CD4-positive, alpha-beta T cell (primary cell): ENCODE measurements at regions of chr1 and their contacts with region 1.

Region 1: DNA sequence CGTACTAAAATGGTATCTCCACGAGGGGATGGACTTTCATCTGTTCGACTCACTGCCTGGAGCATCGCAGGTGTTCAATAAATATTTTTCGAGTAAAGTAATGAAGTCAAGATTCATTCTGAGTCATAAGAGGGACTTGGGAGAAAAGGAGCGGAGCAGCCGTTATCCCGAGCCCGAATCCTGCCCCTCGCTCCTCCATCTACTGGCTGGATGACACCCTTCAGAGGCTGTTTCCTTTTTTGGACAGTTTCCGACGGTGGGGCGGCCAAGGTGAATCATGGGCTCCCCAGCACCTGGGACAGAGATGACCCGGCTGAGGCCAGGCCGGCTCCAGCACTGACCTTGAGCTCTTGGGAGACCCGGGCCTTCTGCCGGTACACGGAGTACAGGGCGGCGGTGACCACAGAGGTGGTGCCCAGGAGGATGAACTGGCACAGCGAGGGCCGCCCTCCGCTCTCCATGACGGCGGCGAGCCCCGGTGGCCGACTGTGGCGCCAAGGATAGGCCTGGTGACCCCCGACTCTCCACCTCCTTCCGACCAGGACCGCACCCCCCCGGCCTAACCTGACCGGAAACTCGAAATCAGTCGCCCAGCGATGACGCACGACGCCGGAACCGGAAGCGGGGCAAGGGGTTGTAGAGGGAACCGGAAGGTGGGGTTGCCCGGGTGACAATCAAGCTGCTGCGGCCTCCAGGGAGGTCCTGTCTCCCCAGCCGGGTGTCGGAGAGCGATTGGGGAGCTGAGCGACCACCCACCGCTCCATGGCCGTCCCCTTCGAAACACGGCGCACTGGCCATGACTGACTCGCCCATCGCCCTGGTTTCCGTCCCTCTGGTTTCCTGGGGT is at the start of gene MUL1:
- DNase-seq: peak; percentile 85 to 95 (median 91)
- ATAC-seq: peak; percentile 85
- H3K4me3 ChIP-seq: peak within 1 kb of the TSS; percentile 100
- H3K4me3 Mint-ChIP-seq: peak within 1 kb of the TSS; percentile 86
- H3K27ac ChIP-seq: peak within 1 kb of the TSS; percentile 93 to 98
- H3K27ac Mint-ChIP-seq: peak within 1 kb of the TSS; percentile 83
- H3K4me1 ChIP-seq: peaks cover 25% of the 10 kb centered on the region
- H3K4me1 Mint-ChIP-seq: peaks cover 30% of the 10 kb centered on the region
- H3K27me3 ChIP-seq: no peaks in the 10 kb centered on the region
- H3K27me3 Mint-ChIP-seq: peaks cover 11% of the 10 kb centered on the region
- CTCF ChIP-seq: no peak
- total RNA-seq, gene MUL1: 17.2 to 17.6 TPM

Region 2: DNA sequence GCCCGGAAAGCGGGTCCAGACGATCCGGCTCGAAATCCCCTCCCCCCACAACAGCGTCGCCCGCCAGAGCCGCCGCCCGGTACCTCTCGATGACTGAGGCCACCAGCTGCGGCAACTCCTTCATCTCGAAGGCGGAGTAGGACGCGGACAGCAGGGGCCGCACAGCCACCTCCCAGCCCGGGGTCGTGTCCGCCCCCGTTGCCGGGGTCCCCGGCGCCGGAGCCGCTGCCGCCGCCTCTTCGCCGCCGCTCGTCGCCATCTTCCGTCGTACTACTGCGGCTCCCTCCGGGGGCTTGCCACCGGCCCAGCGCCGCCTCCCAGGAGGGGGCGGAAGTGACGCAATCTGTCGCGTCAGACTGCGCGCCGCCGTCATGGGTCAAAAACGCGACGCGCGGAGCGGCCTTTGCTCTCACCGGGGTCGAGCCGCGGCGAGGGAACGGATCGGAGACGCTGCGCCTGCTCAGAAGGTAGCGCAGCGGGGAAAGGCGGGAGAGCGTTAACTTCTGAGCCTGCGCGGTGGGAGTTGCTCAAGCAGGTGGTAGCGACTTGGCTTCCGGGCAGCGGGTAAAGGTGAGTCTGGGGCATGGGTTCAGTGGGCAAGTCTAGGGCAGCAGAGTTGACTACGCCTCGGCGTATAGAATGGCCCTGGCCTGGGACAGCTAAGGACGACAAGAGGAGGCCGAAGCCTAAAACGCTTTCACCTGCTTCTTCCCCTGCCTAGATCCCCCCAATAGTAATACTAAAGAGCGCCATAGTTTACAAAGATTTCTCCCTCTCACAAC is 1297.6 kb before region 1 on chr1 and contains the start of gene UBR4:
- CTCF ChIA-PET with region 1: no interaction called
- POLR2A ChIA-PET with region 1: no interaction called
- intact Hi-C with region 1: loop called in 1 of 2 experiments (anchors 5 kb)
- DNase-seq: peak; percentile 92 to 99 (median 96)
- ATAC-seq: peak; percentile 92
- H3K4me3 ChIP-seq: peak within 1 kb of the TSS; percentile 93
- H3K4me3 Mint-ChIP-seq: peak within 1 kb of the TSS; percentile 96
- H3K27ac ChIP-seq: peak within 1 kb of the TSS; percentile 87 to 92
- H3K27ac Mint-ChIP-seq: peak within 1 kb of the TSS; percentile 95
- H3K4me1 ChIP-seq: peaks cover 42% of the 10 kb centered on the region
- H3K4me1 Mint-ChIP-seq: peaks cover 77% of the 10 kb centered on the region
- H3K27me3 ChIP-seq: no peaks in the 10 kb centered on the region
- H3K27me3 Mint-ChIP-seq: no peaks in the 10 kb centered on the region
- CTCF ChIP-seq: no peak
- total RNA-seq, gene UBR4: 116 to 125 TPM

Region 3: GRCh38 chr1:19251305-19252196 is 1256.2 kb before region 1 on chr1 and contains the starts of genes EMC1 and MRTO4:
- CTCF ChIA-PET with region 1: no interaction called
- POLR2A ChIA-PET with region 1: no interaction called
- intact Hi-C with region 1: loop called in 1 of 2 experiments (anchors 5 kb)
- DNase-seq: peak; percentile 79 to 92 (median 86)
- ATAC-seq: peak; percentile 93
- H3K4me3 ChIP-seq: peak within 1 kb of the TSS; percentile 80
- H3K4me3 Mint-ChIP-seq: peak within 1 kb of the TSS; percentile 96
- H3K27ac ChIP-seq: peak within 1 kb of the TSS; percentile 93 to 95
- H3K27ac Mint-ChIP-seq: peak within 1 kb of the TSS; percentile 94
- H3K4me1 ChIP-seq: peaks cover 40% of the 10 kb centered on the region
- H3K4me1 Mint-ChIP-seq: peaks cover 34% of the 10 kb centered on the region
- H3K27me3 ChIP-seq: no peaks in the 10 kb centered on the region
- H3K27me3 Mint-ChIP-seq: no peaks in the 10 kb centered on the region
- CTCF ChIP-seq: no peak
- total RNA-seq, gene EMC1: 21.9 to 22.2 TPM
- total RNA-seq, gene MRTO4: 10.2 to 12.0 TPM

Region 4: GRCh38 chr1:19903600-19903999 is 604.2 kb before region 1 on chr1:
- CTCF ChIA-PET with region 1: no interaction called
- POLR2A ChIA-PET with region 1: no interaction called
- intact Hi-C with region 1: no loop called
- DNase-seq: no peak
- ATAC-seq: no peak
- H3K4me3 ChIP-seq: no peak overlapping the region
- H3K4me3 Mint-ChIP-seq: no peak overlapping the region
- H3K27ac ChIP-seq: no peak overlapping the region
- H3K27ac Mint-ChIP-seq: no peak overlapping the region
- H3K4me1 ChIP-seq: no peaks in the 10 kb centered on the region
- H3K4me1 Mint-ChIP-seq: no peaks in the 10 kb centered on the region
- H3K27me3 ChIP-seq: no peaks in the 10 kb centered on the region
- H3K27me3 Mint-ChIP-seq: no peaks in the 10 kb centered on the region
- CTCF ChIP-seq: no peak

Region 5: GRCh38 chr1:20485527-20486456 is 22.0 kb before region 1 on chr1 and contains the start of gene CAMK2N1:
- CTCF ChIA-PET with region 1: interaction called, 3 read pairs
- POLR2A ChIA-PET with region 1: interaction called, 10 read pairs
- intact Hi-C with region 1: no loop called
- DNase-seq: peak; percentile 23 to 82 (median 60)
- ATAC-seq: peak; percentile 73
- H3K4me3 ChIP-seq: peak within 1 kb of the TSS; percentile 62
- H3K4me3 Mint-ChIP-seq: peak within 1 kb of the TSS; percentile 86
- H3K27ac ChIP-seq: no peak within 1 kb of the TSS
- H3K27ac Mint-ChIP-seq: peak within 1 kb of the TSS; percentile 60
- H3K4me1 ChIP-seq: peaks cover 29% of the 10 kb centered on the region
- H3K4me1 Mint-ChIP-seq: peaks cover 17% of the 10 kb centered on the region
- H3K27me3 ChIP-seq: peaks cover 31 to 51% of the 10 kb centered on the region in 2 experiments
- H3K27me3 Mint-ChIP-seq: peaks cover 59% of the 10 kb centered on the region
- CTCF ChIP-seq: no peak
- total RNA-seq, gene CAMK2N1: 2.3 TPM

Region 6: GRCh38 chr1:20551945-20552727 is 44.3 kb after region 1 on chr1 and contains the start of gene FAM43B:
- CTCF ChIA-PET with region 1: no interaction called
- POLR2A ChIA-PET with region 1: no interaction called
- intact Hi-C with region 1: no loop called
- DNase-seq: no peak
- ATAC-seq: no peak
- H3K4me3 ChIP-seq: no peak within 1 kb of the TSS
- H3K4me3 Mint-ChIP-seq: no peak within 1 kb of the TSS
- H3K27ac ChIP-seq: no peak within 1 kb of the TSS
- H3K27ac Mint-ChIP-seq: no peak within 1 kb of the TSS
- H3K4me1 ChIP-seq: no peaks in the 10 kb centered on the region
- H3K4me1 Mint-ChIP-seq: no peaks in the 10 kb centered on the region
- H3K27me3 ChIP-seq: peaks cover 31 to 50% of the 10 kb centered on the region in 2 experiments
- H3K27me3 Mint-ChIP-seq: peaks cover 41% of the 10 kb centered on the region
- CTCF ChIP-seq: no peak
- total RNA-seq, gene FAM43B: not detected

Region 7: DNA sequence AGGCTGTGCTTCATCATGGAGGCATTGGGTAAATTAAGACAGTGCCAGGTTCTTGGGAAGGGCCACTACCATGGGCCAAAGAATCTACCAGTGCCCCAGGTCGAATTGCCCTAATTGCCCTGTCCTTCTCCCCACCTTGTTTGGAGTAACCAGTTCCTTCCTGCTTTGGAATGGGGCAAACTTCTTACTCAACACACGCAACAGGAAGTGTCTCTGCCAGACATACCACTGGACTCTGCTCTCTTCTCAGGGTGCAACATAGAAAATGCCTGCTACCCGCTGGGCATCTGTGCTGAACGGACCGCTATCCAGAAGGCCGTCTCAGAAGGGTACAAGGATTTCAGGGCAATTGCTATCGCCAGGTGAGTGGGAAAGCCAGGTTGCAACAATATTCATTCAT is 96.9 kb after region 1 on chr1:
- CTCF ChIA-PET with region 1: no interaction called
- POLR2A ChIA-PET with region 1: no interaction called
- intact Hi-C with region 1: no loop called
- DNase-seq: no peak
- ATAC-seq: no peak
- H3K4me3 ChIP-seq: no peak overlapping the region
- H3K4me3 Mint-ChIP-seq: no peak overlapping the region
- H3K27ac ChIP-seq: no peak overlapping the region
- H3K27ac Mint-ChIP-seq: no peak overlapping the region
- H3K4me1 ChIP-seq: no peaks in the 10 kb centered on the region
- H3K4me1 Mint-ChIP-seq: no peaks in the 10 kb centered on the region
- H3K27me3 ChIP-seq: no peaks in the 10 kb centered on the region
- H3K27me3 Mint-ChIP-seq: peaks cover 15% of the 10 kb centered on the region
- CTCF ChIP-seq: no peak

Region 8: GRCh38 chr1:20633190-20634064 is 125.6 kb after region 1 on chr1 and contains the start of gene PINK1:
- CTCF ChIA-PET with region 1: no interaction called
- POLR2A ChIA-PET with region 1: interaction called, 10 read pairs
- intact Hi-C with region 1: no loop called
- DNase-seq: peak; percentile 72 to 97 (median 86)
- ATAC-seq: peak; percentile 84
- H3K4me3 ChIP-seq: peak within 1 kb of the TSS; percentile 69
- H3K4me3 Mint-ChIP-seq: peak within 1 kb of the TSS; percentile 94
- H3K27ac ChIP-seq: peak within 1 kb of the TSS; percentile 52 to 72
- H3K27ac Mint-ChIP-seq: peak within 1 kb of the TSS; percentile 87
- H3K4me1 ChIP-seq: peaks cover 18% of the 10 kb centered on the region
- H3K4me1 Mint-ChIP-seq: peaks cover 12% of the 10 kb centered on the region
- H3K27me3 ChIP-seq: peaks cover 0 to 3% of the 10 kb centered on the region in 2 experiments
- H3K27me3 Mint-ChIP-seq: peaks cover 5% of the 10 kb centered on the region
- CTCF ChIP-seq: peak; percentile 99
- total RNA-seq, gene PINK1: 6.6 to 7.5 TPM

Region 9: DNA sequence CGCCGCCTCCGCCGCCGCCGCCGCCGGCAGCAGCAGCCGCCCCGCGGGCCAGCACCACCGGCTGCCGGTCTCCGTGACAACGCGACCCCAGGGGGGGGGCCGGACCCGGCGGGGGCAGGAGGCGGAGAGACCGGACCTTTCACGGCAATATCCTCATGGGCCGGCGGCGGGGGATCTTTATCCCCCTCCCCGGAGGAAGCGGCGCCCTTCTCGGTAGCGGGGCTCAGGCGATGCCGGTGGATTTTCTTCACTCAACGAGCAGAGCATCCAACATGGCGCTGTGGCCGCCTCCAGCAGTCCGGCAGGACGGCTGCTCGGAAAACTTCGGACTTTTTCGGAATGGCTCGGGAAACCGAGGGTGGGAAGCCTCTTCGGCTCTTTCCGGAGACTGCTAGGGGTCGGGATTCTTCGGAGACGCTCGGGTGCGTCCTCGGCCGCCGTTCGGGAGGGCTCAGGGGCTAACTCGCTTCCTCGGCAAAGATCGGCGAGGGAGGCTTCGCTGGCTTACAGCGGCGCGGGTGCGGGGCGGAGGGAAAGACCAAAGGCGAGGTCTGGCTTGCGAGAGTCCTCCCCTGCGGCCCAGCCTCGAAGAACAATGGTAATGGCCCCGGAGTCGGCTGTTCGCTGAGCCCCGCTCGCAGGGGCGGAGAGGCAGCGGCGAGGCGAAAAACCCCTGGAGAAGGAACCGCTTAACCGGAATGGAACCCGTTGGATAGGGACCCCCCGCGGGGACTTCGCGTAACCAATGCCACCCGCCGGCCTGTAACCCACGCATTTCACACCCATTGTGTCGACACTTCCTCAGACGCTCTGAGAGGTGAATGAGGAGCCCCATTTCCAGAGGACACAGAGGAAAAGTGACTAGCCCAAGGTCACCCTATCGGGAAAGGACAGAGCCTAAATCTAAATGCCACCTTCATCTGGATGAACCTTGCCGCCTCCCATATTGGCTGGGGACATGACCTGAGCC is 669.1 kb after region 1 on chr1 and contains the start of gene EIF4G3:
- CTCF ChIA-PET with region 1: no interaction called
- POLR2A ChIA-PET with region 1: no interaction called
- intact Hi-C with region 1: loop called in 1 of 2 experiments (anchors 5 kb)
- DNase-seq: peak; percentile 98 to 100 (median 99)
- ATAC-seq: peak; percentile 94
- H3K4me3 ChIP-seq: peak within 1 kb of the TSS; percentile 88
- H3K4me3 Mint-ChIP-seq: peak within 1 kb of the TSS; percentile 89
- H3K27ac ChIP-seq: peak within 1 kb of the TSS; percentile 72 to 75
- H3K27ac Mint-ChIP-seq: peak within 1 kb of the TSS; percentile 85
- H3K4me1 ChIP-seq: peaks cover 17% of the 10 kb centered on the region
- H3K4me1 Mint-ChIP-seq: peaks cover 20% of the 10 kb centered on the region
- H3K27me3 ChIP-seq: no peaks in the 10 kb centered on the region
- H3K27me3 Mint-ChIP-seq: no peaks in the 10 kb centered on the region
- CTCF ChIP-seq: no peak
- total RNA-seq, gene EIF4G3: 18.8 to 21.5 TPM